Endothelial cell of umbilical vein (primary cell): ENCODE measurements at regions of chr16 and their contacts with region 1.

Region 1: GRCh38 chr16:660459-661183 is 7.3 kb upstream of the RHOT2 start:
- DNase-seq: peak; percentile 88
- H3K4me3 ChIP-seq: peak overlapping the region in 1 of 3 experiments; percentile 11
- H3K27ac ChIP-seq: no peak overlapping the region
- H3K4me1 ChIP-seq: no peaks in the 10 kb centered on the region
- H3K27me3 ChIP-seq: no peaks in the 10 kb centered on the region
- CTCF ChIP-seq: peak; percentile 38 to 74
- POLR2A ChIP-seq: peak; percentile 56

Region 2: DNA sequence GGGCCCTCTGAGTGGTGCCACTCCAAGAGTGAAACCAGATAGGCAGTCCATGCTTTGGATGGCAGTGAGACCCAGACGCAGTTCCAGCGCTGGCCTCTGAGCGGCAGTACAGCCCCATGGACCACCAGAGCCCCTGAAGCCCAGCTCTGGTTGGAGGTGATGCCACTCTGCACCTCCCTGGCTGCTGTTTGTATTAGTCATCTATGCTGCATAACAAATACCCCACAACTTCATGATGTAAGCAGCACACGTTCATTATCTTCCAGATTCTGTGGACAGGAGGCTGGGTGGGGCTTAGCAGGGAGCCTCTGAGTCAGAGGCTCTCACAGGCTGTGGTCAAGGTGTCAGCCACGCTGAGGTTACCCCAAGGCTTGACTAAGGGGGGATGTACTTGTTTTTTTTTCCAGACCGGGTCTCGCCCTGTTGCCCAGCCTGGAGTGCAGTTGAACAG is 268.7 kb before region 1 on chr16:
- CTCF ChIA-PET with region 1: no interaction called
- POLR2A ChIA-PET with region 1: no interaction called
- dilution Hi-C with region 1: no loop called
- intact Hi-C with region 1: loop called (anchors 1 kb)
- DNase-seq: peak; percentile 65
- H3K4me3 ChIP-seq: no peak overlapping the region
- H3K27ac ChIP-seq: no peak overlapping the region
- H3K4me1 ChIP-seq: peaks cover 3% of the 10 kb centered on the region
- H3K27me3 ChIP-seq: no peaks in the 10 kb centered on the region
- CTCF ChIP-seq: peak; percentile 88 to 93
- POLR2A ChIP-seq: no peak

Region 3: GRCh38 chr16:578870-579405 is 81.7 kb before region 1 on chr16:
- CTCF ChIA-PET with region 1: interaction called, 10 read pairs
- POLR2A ChIA-PET with region 1: interaction called, 8 read pairs
- dilution Hi-C with region 1: no loop called
- intact Hi-C with region 1: loop called (anchors 1 kb)
- DNase-seq: peak; percentile 76
- H3K4me3 ChIP-seq: peak overlapping the region in 1 of 3 experiments; percentile 20
- H3K27ac ChIP-seq: no peak overlapping the region
- H3K4me1 ChIP-seq: peaks cover 2% of the 10 kb centered on the region
- H3K27me3 ChIP-seq: no peaks in the 10 kb centered on the region
- CTCF ChIP-seq: peak; percentile 95 to 98
- POLR2A ChIP-seq: no peak

Region 4: DNA sequence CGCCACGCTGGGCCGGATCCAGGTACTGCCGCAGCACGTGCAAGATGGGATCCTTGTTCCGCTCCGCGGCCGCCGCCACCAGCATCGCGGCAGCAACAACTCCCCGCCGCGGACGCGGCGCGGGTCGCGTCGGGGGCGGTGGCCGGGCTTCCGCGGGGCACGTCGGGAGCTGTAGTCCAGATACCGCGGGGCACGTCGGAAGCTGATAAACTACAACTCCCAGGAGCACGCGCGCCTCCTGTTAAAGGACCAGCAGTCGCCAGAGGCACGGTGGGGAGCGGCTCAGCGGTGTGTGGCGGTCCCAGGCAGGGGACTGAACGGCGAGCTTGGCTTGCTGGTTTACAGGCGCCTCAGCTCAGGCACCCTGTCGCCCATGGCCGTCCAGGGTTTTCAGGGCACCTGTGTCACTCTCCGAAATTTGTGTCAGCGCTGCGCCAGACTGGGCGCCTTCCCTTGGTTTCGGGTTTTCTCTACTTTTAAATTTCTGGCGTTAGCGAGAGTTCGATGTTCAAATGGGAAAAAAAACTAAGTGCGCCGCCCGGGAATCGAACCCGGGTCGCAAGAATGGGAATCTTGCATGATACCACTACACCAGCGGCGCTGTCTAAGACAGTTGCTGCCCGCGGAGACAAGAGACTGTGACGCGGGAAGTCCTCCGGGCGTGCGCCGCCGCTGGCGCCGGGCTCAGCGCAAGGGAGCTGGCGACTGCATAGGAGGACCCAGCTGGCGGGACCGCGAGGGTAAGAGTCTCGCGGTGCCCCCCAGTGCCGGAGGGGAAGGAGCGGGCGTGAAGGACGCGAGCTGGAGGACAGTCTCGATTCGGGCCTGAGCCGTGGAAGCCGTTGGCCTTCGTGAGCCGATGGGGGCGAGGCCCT is 24.2 kb before region 1 on chr16 and contains the start of gene METTL26:
- CTCF ChIA-PET with region 1: interaction called, 8 read pairs
- POLR2A ChIA-PET with region 1: no interaction called
- dilution Hi-C with region 1: no loop called
- intact Hi-C with region 1: loop called (anchors 1 kb)
- DNase-seq: peak; percentile 93
- H3K4me3 ChIP-seq: peak within 1 kb of the TSS; percentile 37 to 82 (median 61)
- H3K27ac ChIP-seq: peak within 1 kb of the TSS; percentile 68
- H3K4me1 ChIP-seq: peaks cover 9% of the 10 kb centered on the region
- H3K27me3 ChIP-seq: no peaks in the 10 kb centered on the region
- CTCF ChIP-seq: no peak
- POLR2A ChIP-seq: peak; percentile 95
- total RNA-seq, gene METTL26: 112 and 114 TPM in 2 replicates

Region 5: DNA sequence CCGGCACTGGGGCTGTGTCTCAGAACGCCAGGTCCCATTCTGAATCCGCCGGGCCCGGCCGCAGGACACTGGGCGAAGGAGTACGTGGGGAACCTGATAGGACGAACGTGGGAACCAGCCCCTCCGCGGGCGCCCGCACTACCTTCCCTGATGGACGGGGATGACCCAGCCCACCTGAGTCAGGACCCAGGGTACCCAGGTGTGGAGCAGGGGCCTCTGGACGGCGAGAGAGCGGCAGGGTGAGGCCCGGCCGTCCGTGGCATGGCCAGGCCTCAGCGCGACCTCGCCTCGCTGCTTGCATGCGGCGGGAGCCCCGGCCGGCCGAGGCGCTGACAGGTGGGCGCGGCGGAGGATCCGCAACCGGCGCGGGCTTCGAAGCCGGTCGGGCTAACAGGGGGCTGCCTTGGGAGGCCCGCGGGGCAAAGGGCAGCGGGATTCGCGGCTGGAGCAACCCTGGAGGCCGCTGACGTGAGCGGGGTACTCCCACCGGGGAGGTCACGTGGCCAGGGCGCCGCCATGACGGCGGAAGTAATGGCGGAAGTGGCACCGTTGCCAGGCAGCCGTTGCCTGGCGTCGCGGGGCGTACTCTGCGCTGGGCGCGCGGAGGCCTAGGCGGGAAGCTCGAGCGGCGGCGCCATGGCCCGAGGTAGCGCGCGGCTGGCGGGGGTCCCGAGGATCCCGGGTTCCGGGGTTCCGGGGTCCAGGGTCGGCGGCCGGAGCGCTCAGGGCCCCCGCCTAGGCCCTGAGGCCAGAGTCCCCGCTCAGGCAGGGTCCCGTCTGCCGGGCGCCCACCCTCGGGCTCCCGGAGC is 11.6 kb before region 1 on chr16 and contains the start of gene WDR90:
- CTCF ChIA-PET with region 1: interaction called, 16 read pairs
- POLR2A ChIA-PET with region 1: interaction called, 3 read pairs
- dilution Hi-C with region 1: no loop called
- intact Hi-C with region 1: loop called (anchors 1 kb)
- DNase-seq: peak; percentile 89
- H3K4me3 ChIP-seq: peak within 1 kb of the TSS; percentile 13 to 57 (median 55)
- H3K27ac ChIP-seq: peak within 1 kb of the TSS; percentile 69
- H3K4me1 ChIP-seq: peaks cover 8% of the 10 kb centered on the region
- H3K27me3 ChIP-seq: no peaks in the 10 kb centered on the region
- CTCF ChIP-seq: no peak
- POLR2A ChIP-seq: peak; percentile 61
- total RNA-seq, gene WDR90: 50.0 and 51.8 TPM in 2 replicates